CD8-positive, alpha-beta T cell (primary cell): ENCODE measurements at regions of chr6 and their contacts with region 1.

Region 1: DNA sequence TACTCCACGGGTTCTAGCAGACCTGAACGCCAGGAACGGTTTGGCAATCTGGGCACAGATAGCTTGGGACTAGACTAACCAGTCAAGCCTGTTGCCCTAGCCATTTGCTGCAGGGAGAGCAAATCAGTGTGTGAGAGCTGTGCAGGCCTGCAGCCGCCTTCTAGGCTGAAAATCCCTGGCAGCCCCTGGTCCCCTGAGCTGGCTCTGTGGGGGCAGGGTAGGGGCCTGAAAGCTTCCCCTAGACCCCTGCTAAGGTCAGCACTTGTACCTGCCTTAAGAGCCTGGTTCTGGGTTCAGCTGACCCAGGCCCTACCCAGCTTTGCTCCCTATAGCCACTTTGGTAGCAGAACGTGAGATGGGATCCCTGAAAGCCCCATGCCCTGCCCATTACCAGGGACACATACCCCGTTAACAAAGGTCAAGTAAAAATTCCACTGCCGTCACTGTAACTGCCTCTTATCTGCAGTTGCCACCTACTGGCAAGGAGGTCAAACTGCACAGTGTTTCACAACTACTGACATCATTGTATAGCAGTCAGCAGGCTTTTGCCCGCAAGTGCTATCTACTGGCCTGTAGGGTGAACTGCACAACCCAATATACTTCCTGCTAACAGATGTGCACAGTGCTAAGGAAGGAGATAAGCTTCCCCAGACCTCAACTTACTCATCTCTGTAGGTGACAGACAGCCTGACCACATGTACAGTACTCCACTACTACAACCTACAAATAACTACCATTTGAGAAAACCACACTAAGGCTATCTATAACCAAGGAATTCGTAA is 95.1 kb upstream of the OLIG3 start:
- DNase-seq: peak in 8 of 9 experiments; percentile 26 to 86 (median 58)
- ATAC-seq: peak; percentile 99
- H3K4me3 ChIP-seq: no peak overlapping the region
- H3K4me3 Mint-ChIP-seq: no peak overlapping the region
- H3K27ac ChIP-seq: no peak overlapping the region
- H3K27ac Mint-ChIP-seq: peak overlapping the region; percentile 0
- H3K4me1 ChIP-seq: peaks cover 9% of the 10 kb centered on the region
- H3K4me1 Mint-ChIP-seq: peaks cover 16% of the 10 kb centered on the region
- H3K27me3 ChIP-seq: no peaks in the 10 kb centered on the region
- H3K27me3 Mint-ChIP-seq: peaks cover 7% of the 10 kb centered on the region
- CTCF ChIP-seq: peak; percentile 61

Region 2: DNA sequence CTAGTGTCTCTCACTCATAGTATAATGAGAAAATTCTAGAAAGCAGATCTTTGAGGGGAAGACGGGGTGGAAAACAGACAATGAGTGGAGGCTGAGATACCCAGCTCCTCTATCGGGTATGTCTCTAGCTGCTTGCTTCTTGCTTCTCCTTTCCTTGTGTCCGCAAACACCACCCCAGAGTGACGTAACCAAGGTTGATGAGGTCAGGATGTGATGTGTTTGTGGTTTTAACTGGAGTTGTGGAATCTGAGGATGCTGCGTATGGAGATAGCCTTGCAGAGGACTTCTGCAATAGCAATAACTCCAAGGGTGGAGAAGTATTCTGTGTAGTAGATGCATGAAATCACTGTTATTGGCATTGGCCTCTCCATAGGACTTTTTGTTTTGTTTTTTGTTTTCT is 237.4 kb before region 1 on chr6:
- CTCF ChIA-PET with region 1: interaction called, 10 read pairs
- POLR2A ChIA-PET with region 1: no interaction called
- intact Hi-C with region 1: no loop called
- DNase-seq: peak in 1 of 9 experiments; percentile 34
- ATAC-seq: no peak
- H3K4me3 ChIP-seq: no peak overlapping the region
- H3K4me3 Mint-ChIP-seq: no peak overlapping the region
- H3K27ac ChIP-seq: no peak overlapping the region
- H3K27ac Mint-ChIP-seq: no peak overlapping the region
- H3K4me1 ChIP-seq: peaks cover 15% of the 10 kb centered on the region
- H3K4me1 Mint-ChIP-seq: peaks cover 21% of the 10 kb centered on the region
- H3K27me3 ChIP-seq: no peaks in the 10 kb centered on the region
- H3K27me3 Mint-ChIP-seq: peaks cover 2% of the 10 kb centered on the region
- CTCF ChIP-seq: no peak

Region 3: DNA sequence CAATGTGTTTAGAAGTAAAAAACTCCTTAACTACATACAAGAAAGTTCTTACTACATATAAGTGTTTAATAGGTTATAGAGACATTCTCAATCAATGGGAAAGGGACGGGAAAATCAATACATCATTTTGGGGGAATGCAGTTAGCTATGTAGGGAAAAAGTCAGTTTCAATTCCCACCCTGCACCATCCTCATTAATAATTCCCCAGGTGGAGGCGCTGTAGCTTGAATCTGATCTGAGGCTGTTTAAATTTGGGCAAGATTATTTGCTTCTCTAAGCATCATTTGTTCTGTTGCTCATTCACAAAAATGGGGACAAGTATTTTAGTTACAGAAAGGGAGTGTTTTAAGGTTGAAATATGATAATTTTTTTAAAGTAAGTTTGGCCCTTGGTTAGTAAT is 114.2 kb before region 1 on chr6:
- CTCF ChIA-PET with region 1: interaction called, 11 read pairs
- POLR2A ChIA-PET with region 1: no interaction called
- intact Hi-C with region 1: no loop called
- DNase-seq: peak in 2 of 9 experiments; percentile 15 to 34
- ATAC-seq: no peak
- H3K4me3 ChIP-seq: no peak overlapping the region
- H3K4me3 Mint-ChIP-seq: no peak overlapping the region
- H3K27ac ChIP-seq: no peak overlapping the region
- H3K27ac Mint-ChIP-seq: no peak overlapping the region
- H3K4me1 ChIP-seq: no peaks in the 10 kb centered on the region
- H3K4me1 Mint-ChIP-seq: no peaks in the 10 kb centered on the region
- H3K27me3 ChIP-seq: no peaks in the 10 kb centered on the region
- H3K27me3 Mint-ChIP-seq: peaks cover 21% of the 10 kb centered on the region
- CTCF ChIP-seq: no peak

Region 4: DNA sequence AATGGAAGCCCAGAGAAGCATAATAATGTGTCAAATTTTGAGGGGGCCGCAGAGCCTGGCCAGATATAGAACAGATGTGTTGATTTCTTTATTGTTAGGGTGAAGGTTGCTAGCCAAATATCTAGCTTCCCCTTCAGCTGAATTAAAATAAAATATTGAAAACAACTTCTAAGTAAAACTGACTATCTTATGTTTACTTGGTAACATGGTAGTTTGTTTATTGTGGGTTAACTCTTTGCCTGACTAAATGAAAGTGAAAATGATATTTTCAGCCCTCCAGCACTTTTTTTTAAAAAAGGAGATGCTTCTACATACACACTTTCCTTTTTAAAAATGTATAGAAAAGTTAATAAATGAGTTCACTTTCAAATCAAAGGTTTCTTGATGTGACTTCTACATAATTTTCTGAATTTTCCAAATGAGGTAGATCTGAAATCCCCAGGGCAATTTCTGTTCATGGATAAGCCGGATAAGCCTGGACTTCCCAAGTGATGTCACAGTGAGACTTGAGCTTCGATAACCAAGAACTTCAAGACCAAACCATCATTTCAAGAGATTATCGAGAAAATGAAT is 77.0 kb after region 1 on chr6:
- CTCF ChIA-PET with region 1: no interaction called
- POLR2A ChIA-PET with region 1: no interaction called
- intact Hi-C with region 1: no loop called
- DNase-seq: peak in 2 of 9 experiments; percentile 15 to 54
- ATAC-seq: peak; percentile 34
- H3K4me3 ChIP-seq: no peak overlapping the region
- H3K4me3 Mint-ChIP-seq: peak overlapping the region; percentile 3
- H3K27ac ChIP-seq: no peak overlapping the region
- H3K27ac Mint-ChIP-seq: peak overlapping the region; percentile 25
- H3K4me1 ChIP-seq: no peaks in the 10 kb centered on the region
- H3K4me1 Mint-ChIP-seq: no peaks in the 10 kb centered on the region
- H3K27me3 ChIP-seq: no peaks in the 10 kb centered on the region
- H3K27me3 Mint-ChIP-seq: peaks cover 3% of the 10 kb centered on the region
- CTCF ChIP-seq: no peak